Panc1 (cell line): ENCODE measurements at regions of chr2 and their contacts with region 1.

Region 1: GRCh38 chr2:238339395-238340213 is 19.3 kb downstream of the TRAF3IP1 start:
- DNase-seq: no peak
- ATAC-seq: peak; percentile 80
- H3K4me3 ChIP-seq: no peak overlapping the region
- H3K27ac ChIP-seq: no peak overlapping the region
- H3K4me1 ChIP-seq: no peaks in the 10 kb centered on the region
- H3K27me3 ChIP-seq: no peaks in the 10 kb centered on the region
- CTCF ChIP-seq: no peak

Region 2: GRCh38 chr2:238187618-238188548 is 151.7 kb before region 1 on chr2:
- CTCF ChIA-PET with region 1: interaction called, 13 read pairs
- POLR2A ChIA-PET with region 1: no interaction called
- in situ Hi-C with region 1: no loop called
- intact Hi-C with region 1: no loop called
- DNase-seq: no peak
- ATAC-seq: no peak
- H3K4me3 ChIP-seq: no peak overlapping the region
- H3K27ac ChIP-seq: no peak overlapping the region
- H3K4me1 ChIP-seq: no peaks in the 10 kb centered on the region
- H3K27me3 ChIP-seq: no peaks in the 10 kb centered on the region
- CTCF ChIP-seq: no peak

Region 3: GRCh38 chr2:238239872-238240751 is 99.5 kb before region 1 on chr2 and contains the start of gene HES6:
- CTCF ChIA-PET with region 1: no interaction called
- POLR2A ChIA-PET with region 1: no interaction called
- in situ Hi-C with region 1: no loop called
- intact Hi-C with region 1: no loop called
- DNase-seq: no peak
- ATAC-seq: peak; percentile 91
- H3K4me3 ChIP-seq: peak within 1 kb of the TSS; percentile 65 to 66
- H3K27ac ChIP-seq: peak within 1 kb of the TSS; percentile 63; the same call in 1 of the 2 replicates
- H3K4me1 ChIP-seq: no peaks in the 10 kb centered on the region
- H3K27me3 ChIP-seq: no peaks in the 10 kb centered on the region
- CTCF ChIP-seq: 0 out of 2 replicates have a peak, but pooled peaks have one; percentile 15
- total RNA-seq, gene HES6: 42.0 TPM

Region 4: DNA sequence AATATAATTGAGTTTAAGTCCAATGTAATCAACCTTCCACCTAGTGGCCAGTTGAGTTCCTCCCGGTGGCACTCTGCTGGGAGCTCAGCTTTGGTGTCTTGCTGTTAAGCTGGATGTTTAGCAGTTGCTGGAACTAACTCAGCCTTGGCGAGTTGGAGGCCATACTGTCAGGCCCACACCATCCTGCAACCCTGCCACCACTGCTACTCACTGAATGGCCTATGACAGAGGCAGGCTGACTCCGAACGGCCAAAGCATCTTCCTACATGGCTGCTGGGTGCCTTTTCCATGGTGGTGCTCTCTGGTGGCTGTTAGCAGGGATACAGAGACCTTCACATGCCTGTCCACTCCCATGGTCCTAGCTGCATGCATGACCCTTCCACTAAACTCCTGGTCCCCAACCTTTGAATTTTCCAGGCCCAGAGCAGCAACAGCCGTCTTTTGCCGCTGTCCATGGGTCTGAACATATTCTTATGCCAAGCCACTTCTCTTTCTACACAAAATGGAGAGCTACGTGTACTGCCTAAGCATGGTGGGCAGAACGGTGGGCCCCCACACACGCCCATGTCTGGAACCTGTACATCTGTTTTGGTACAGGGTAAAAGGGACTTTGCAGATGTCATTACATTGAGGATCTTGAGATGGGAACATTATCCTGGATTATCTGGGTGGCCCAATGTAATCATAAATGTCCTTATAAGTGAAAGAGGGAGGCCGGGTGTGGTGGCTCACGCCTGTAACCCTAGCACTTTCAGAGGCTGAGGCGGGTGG is 34.3 kb before region 1 on chr2:
- CTCF ChIA-PET with region 1: no interaction called
- POLR2A ChIA-PET with region 1: interaction called, 14 read pairs
- in situ Hi-C with region 1: no loop called
- intact Hi-C with region 1: no loop called
- DNase-seq: no peak
- ATAC-seq: peak; percentile 62
- H3K4me3 ChIP-seq: no peak overlapping the region
- H3K27ac ChIP-seq: no peak overlapping the region
- H3K4me1 ChIP-seq: no peaks in the 10 kb centered on the region
- H3K27me3 ChIP-seq: no peaks in the 10 kb centered on the region
- CTCF ChIP-seq: peak; percentile 55; the same call in 1 of the 2 replicates

Region 5: DNA sequence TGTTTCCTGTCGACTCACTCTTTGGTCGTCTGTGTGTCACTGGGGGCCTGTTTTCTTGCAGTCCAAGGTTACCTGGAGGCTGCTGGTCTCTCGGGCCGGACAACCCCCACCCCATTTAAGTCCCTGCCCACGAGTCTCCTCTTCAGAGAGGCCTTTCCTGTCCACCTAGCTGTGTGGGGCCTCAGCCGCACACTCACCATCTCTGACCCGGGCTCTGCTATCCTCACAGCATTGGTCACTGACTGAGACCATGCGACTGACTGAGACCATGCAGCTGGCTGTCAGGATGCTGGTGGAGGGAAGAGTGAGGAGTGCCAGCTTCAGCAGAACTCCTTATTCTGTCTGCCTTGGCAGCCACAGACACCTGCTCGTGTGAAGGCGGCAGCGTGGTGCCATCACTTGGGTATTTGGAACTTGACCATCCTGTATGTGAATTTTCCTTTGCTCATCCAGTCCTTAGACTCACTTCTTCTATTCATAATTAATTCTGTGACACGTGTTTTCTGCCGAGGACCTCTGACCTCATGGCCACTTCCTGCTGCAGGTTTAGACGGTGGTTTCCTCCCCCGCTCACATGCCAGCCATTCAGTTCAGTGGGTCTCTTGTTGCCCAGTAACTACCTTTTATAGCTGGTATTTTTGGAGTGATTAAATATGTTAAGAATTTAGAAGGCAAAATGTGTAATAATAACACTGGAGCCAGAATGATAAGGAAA is 39.6 kb after region 1 on chr2:
- CTCF ChIA-PET with region 1: no interaction called
- POLR2A ChIA-PET with region 1: no interaction called
- in situ Hi-C with region 1: no loop called
- intact Hi-C with region 1: no loop called
- DNase-seq: no peak
- ATAC-seq: no peak; the same call in 1 of the 2 replicates
- H3K4me3 ChIP-seq: no peak overlapping the region
- H3K27ac ChIP-seq: no peak overlapping the region
- H3K4me1 ChIP-seq: no peaks in the 10 kb centered on the region
- H3K27me3 ChIP-seq: no peaks in the 10 kb centered on the region
- CTCF ChIP-seq: no peak

Region 6: GRCh38 chr2:238635647-238636051 is 296.0 kb after region 1 on chr2:
- CTCF ChIA-PET with region 1: no interaction called
- POLR2A ChIA-PET with region 1: no interaction called
- in situ Hi-C with region 1: no loop called
- intact Hi-C with region 1: no loop called
- DNase-seq: no peak
- ATAC-seq: no peak
- H3K4me3 ChIP-seq: no peak overlapping the region
- H3K27ac ChIP-seq: no peak overlapping the region
- H3K4me1 ChIP-seq: no peaks in the 10 kb centered on the region; the same call in 1 of the 2 replicates
- H3K27me3 ChIP-seq: no peaks in the 10 kb centered on the region
- CTCF ChIP-seq: no peak